Activated T-helper 1 cell treated with anti-CD3 and anti-CD28 coated beads, Interleukin-12 subunit alpha, Interleukin-12 subunit beta, Interleukin-2, Interleukin-4 antibody, amounts not matched to agents 30 ng/mL and 10 ng/mL and 1 ng/mL, durations not matched to agents 14 hours and 24 hours and 36 hours (primary cell): ENCODE measurements at regions of chr4 and their contacts with region 1.

Region 1: DNA sequence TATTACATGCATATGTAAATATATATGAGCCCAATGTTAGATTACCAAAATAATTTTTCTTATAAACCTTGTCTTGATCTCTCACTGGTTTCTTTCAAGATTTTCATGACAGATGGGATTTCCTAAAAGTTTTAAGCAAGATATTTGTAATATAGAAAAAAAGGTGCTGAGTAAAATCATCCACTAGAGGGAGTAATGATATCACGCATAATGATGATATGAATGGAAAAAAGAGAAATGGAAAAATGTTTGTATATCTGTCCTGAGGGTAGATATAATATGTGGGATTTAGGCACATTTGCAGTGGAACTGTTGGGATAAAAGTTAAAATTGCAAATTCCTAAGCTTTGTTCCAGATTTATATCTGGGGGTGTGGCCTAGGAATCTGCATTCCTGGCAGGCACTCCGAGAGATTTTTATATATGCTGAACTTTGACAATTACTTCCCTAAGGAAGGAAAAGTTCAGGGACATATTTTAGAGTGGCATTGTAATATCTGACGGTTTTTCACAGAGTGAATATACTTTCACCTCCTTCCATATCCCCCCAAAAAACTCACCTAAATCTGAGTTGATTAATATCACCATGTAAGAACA is 60.5 kb downstream of the TMA16 start:
- DNase-seq: no peak
- H3K4me3 Mint-ChIP-seq: no peak overlapping the region
- H3K27ac Mint-ChIP-seq: no peak overlapping the region
- H3K4me1 Mint-ChIP-seq: peaks cover 22% of the 10 kb centered on the region
- H3K27me3 Mint-ChIP-seq: peaks cover 3% of the 10 kb centered on the region

Region 2: GRCh38 chr4:162497564-162498167 is 1057.3 kb before region 1 on chr4:
- intact Hi-C with region 1: loop called (anchors 1 kb)
- DNase-seq: no peak
- H3K4me3 Mint-ChIP-seq: no peak overlapping the region
- H3K27ac Mint-ChIP-seq: no peak overlapping the region
- H3K4me1 Mint-ChIP-seq: no peaks in the 10 kb centered on the region
- H3K27me3 Mint-ChIP-seq: peaks cover 2% of the 10 kb centered on the region

Region 3: DNA sequence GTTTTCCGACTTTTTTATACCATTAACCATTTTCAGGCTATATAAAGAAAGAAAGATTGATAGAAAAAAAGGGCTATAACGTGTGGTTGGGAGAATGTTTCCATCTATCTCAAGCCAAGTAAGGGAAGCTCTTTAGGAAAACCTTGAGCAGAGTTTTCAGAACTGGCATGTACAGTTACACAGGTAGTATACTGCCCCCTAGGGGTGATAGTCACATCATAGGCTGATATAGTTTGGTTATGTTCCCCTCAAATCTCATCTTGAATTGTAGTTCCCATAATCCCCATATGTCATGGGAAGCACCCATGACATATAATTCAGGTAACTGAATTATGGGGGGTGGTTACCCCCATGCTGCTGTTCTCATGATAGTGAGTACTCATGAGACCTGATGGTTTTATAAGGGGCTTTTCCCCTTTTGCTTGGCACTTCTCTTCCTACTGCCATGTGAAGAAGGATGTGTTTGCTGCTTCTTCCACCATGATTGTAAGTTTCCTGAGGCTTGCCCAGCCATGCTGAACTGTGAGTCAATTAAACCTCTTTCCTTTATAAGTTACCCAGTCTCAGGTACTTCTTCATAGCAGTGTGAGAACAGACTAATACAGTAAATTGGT is 126.3 kb after region 1 on chr4:
- intact Hi-C with region 1: loop called (anchors 1 kb)
- DNase-seq: no peak
- H3K4me3 Mint-ChIP-seq: no peak overlapping the region
- H3K27ac Mint-ChIP-seq: no peak overlapping the region
- H3K4me1 Mint-ChIP-seq: no peaks in the 10 kb centered on the region
- H3K27me3 Mint-ChIP-seq: peaks cover 2% of the 10 kb centered on the region

Region 4: GRCh38 chr4:164012396-164013027 is 457.5 kb after region 1 on chr4:
- intact Hi-C with region 1: loop called (anchors 2 kb)
- DNase-seq: no peak
- H3K4me3 Mint-ChIP-seq: no peak overlapping the region
- H3K27ac Mint-ChIP-seq: no peak overlapping the region
- H3K4me1 Mint-ChIP-seq: no peaks in the 10 kb centered on the region
- H3K27me3 Mint-ChIP-seq: peaks cover 5% of the 10 kb centered on the region

Region 5: GRCh38 chr4:164748375-164748774 is 1193.4 kb after region 1 on chr4:
- intact Hi-C with region 1: loop called (anchors 1 kb)
- DNase-seq: no peak
- H3K4me3 Mint-ChIP-seq: no peak overlapping the region
- H3K27ac Mint-ChIP-seq: no peak overlapping the region
- H3K4me1 Mint-ChIP-seq: no peaks in the 10 kb centered on the region
- H3K27me3 Mint-ChIP-seq: no peaks in the 10 kb centered on the region